IMR-90 (cell line): ENCODE measurements at regions of chr15 and their contacts with region 1.

Region 1: DNA sequence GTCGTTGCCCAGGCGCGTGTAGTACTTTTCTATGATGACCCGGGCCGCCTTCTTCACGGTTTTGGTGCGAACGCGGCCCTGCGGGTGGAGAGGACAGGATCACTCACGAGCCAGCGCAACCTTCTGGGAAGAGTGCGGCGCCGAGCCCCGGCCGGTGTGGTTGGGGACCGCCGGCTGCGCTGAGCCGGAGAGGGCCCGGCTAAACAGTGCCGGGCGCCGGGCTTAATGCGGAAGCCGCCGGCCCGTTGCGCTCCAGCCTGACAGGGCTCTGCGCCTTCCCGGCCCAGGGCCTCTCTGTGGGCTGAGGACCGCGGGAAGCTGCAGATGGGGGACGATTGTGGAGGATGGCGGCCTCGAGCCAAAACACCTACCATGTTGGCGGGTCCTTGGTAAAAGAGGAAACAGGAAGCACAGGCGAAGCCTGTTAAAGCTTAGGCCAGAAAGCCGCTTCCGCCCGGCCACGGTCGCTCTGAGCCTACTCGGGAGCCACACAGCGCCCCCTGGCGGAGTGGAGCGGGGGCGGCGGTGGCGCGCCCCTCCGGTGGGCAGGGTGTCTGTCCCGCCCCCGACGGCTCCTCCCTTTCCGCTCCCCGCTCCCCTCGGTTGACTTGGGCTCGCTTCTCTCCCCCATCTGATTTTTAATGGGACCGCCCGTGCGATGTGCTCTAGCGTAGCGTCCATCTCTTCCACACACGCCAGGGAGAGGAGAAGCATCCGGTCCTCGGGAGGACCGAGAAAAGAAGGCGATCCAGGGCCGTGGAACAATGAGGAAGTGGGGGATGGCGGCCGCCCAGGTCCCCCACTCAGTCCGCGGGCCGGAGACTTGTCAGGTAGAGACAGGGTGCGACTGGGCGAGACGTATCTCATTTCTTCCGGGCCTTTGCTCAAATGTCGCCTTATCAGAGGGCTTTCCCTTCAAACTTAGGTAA is at the start of gene RPS17:
- DNase-seq: peak; percentile 93
- ATAC-seq: peak; percentile 95
- H3K4me3 ChIP-seq: peak within 1 kb of the TSS; percentile 99
- H3K27ac ChIP-seq: peak within 1 kb of the TSS; percentile 89
- H3K4me1 ChIP-seq: peaks cover 6% of the 10 kb centered on the region
- H3K27me3 ChIP-seq: no peaks in the 10 kb centered on the region
- CTCF ChIP-seq: peak; percentile 99
- POLR2A ChIP-seq: peak; percentile 99
- RAD21 ChIP-seq: peak; percentile 43
- total RNA-seq, gene RPS17: 2,617 and 3,477 TPM in 2 replicates

Region 2: GRCh38 chr15:81466741-81467140 is 1073.6 kb before region 1 on chr15:
- CTCF ChIA-PET with region 1: no interaction called
- POLR2A ChIA-PET with region 1: no interaction called
- dilution Hi-C with region 1: no loop called
- in situ Hi-C with region 1: no loop called
- intact Hi-C with region 1: no loop called
- DNase-seq: no peak
- ATAC-seq: no peak
- H3K4me3 ChIP-seq: no peak overlapping the region
- H3K27ac ChIP-seq: no peak overlapping the region
- H3K4me1 ChIP-seq: no peaks in the 10 kb centered on the region
- H3K27me3 ChIP-seq: peaks cover 7% of the 10 kb centered on the region
- CTCF ChIP-seq: no peak
- POLR2A ChIP-seq: no peak
- RAD21 ChIP-seq: no peak

Region 3: GRCh38 chr15:82647045-82647834 is 106.9 kb after region 1 on chr15 and contains the start of gene CPEB1:
- CTCF ChIA-PET with region 1: no interaction called
- POLR2A ChIA-PET with region 1: no interaction called
- dilution Hi-C with region 1: no loop called
- in situ Hi-C with region 1: no loop called
- intact Hi-C with region 1: loop called (anchors 1 kb)
- DNase-seq: peak; percentile 30
- ATAC-seq: peak; percentile 76
- H3K4me3 ChIP-seq: peak within 1 kb of the TSS; percentile 63
- H3K27ac ChIP-seq: no peak within 1 kb of the TSS
- H3K4me1 ChIP-seq: no peaks in the 10 kb centered on the region
- H3K27me3 ChIP-seq: peaks cover 48% of the 10 kb centered on the region
- CTCF ChIP-seq: peak; percentile 16; the same call in 1 of the 2 replicates
- POLR2A ChIP-seq: no peak
- RAD21 ChIP-seq: no peak
- total RNA-seq, gene CPEB1: 6.9 and 12.5 TPM in 2 replicates

Region 4: DNA sequence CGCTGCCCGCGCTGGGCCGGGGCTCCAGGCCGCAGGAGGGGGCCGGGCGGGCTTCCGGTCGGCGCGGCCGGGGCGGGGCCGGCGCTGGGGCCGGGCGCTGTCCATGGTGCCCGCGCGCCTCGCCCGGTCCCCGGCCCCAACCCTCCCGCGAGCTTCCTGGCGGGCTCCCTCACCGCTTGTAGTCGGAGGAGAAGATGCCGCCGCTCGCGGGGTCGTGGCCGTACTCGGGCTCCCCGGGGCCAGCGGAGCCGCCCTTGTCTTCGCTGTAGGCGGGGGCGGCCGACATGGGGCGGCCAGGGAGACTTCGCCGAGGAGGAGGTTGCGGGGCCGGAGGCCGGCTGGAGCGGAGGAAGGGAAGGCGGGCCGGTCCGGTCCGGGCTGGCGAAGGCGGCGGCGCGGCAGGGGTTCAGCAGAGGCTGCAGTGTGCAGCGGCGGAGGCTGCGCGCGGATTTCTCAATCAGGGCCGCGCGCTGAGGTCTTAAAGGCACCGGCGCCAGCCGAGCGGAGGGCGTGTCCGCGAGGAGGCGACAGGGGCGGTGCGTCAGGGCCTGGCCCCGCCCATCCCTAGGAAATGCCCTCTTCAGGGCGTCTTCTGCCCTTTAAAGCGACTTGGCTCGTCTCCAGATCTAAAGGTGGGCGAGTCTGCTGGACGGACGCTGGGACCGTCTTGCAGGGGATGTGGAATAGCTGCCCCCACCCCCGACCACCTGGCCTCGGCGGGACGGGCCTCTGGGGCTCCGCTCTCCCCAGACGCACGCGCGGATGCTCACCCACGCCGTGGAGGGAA is 169.3 kb after region 1 on chr15 and contains the start of gene AP3B2:
- CTCF ChIA-PET with region 1: no interaction called
- POLR2A ChIA-PET with region 1: no interaction called
- dilution Hi-C with region 1: no loop called
- in situ Hi-C with region 1: no loop called
- intact Hi-C with region 1: loop called (anchors 10 kb)
- DNase-seq: peak; percentile 49
- ATAC-seq: peak; percentile 98
- H3K4me3 ChIP-seq: peak within 1 kb of the TSS; percentile 48
- H3K27ac ChIP-seq: no peak within 1 kb of the TSS
- H3K4me1 ChIP-seq: peaks cover 2% of the 10 kb centered on the region; the same call in 1 of the 2 replicates
- H3K27me3 ChIP-seq: 0 out of 2 replicates have a peak, but pooled peaks cover 2% of the 10 kb centered on the region
- CTCF ChIP-seq: no peak
- POLR2A ChIP-seq: no peak
- RAD21 ChIP-seq: no peak
- total RNA-seq, gene AP3B2: not detected in 2 replicates

Region 5: DNA sequence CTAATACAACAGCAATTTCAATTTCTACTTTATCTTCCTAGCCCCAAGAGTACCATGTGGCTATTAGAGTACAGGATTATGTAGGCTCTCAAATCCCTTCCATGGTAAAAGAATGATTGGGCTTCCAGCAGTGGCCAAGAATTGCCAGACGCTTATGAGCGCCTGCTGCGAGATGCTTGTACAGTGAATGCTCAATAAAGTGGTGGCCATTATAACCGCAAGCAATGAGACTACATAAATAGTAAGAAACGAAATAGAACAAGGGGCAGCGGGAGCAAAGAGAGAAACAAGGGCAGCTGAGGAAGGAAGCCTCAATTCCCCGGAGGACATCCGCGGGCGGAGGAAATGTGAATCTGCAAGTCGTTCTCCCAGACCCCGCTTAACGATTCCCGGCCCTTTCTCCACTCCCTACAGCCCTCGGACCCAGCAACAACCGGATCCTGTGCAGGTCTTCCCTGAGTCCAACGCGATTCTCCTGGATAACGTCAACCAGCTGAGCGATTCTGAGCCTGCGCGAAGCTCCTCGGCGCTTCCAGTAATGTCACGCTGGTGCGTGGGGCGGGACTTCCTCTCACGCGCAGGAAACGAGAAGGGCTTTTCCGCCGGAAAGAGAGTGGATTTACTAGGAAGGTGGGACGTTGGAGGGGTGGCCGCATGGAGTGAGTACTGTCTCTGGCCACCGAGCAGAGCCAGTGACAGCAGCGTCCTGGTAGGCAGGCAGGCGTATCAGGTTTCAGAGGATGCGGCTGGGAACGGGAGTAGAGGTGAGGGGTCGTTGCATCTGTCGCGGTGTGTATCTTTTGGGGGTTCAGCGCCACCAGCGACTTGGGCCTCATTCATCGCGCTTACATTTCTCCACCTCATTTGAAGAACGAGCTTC is 209.9 kb after region 1 on chr15:
- CTCF ChIA-PET with region 1: no interaction called
- POLR2A ChIA-PET with region 1: no interaction called
- dilution Hi-C with region 1: no loop called
- in situ Hi-C with region 1: no loop called
- intact Hi-C with region 1: loop called (anchors 1 kb)
- DNase-seq: peak; percentile 94
- ATAC-seq: peak; percentile 99
- H3K4me3 ChIP-seq: peak overlapping the region; percentile 86
- H3K27ac ChIP-seq: peak overlapping the region; percentile 87
- H3K4me1 ChIP-seq: peaks cover 2% of the 10 kb centered on the region; the same call in 1 of the 2 replicates
- H3K27me3 ChIP-seq: no peaks in the 10 kb centered on the region
- CTCF ChIP-seq: no peak
- POLR2A ChIP-seq: peak; percentile 77
- RAD21 ChIP-seq: no peak

Region 6: GRCh38 chr15:82778755-82779154 is 238.4 kb after region 1 on chr15:
- CTCF ChIA-PET with region 1: no interaction called
- POLR2A ChIA-PET with region 1: no interaction called
- dilution Hi-C with region 1: no loop called
- in situ Hi-C with region 1: no loop called
- intact Hi-C with region 1: no loop called
- DNase-seq: no peak
- ATAC-seq: no peak
- H3K4me3 ChIP-seq: no peak overlapping the region
- H3K27ac ChIP-seq: no peak overlapping the region
- H3K4me1 ChIP-seq: no peaks in the 10 kb centered on the region
- H3K27me3 ChIP-seq: no peaks in the 10 kb centered on the region
- CTCF ChIP-seq: no peak
- POLR2A ChIP-seq: no peak
- RAD21 ChIP-seq: no peak

Region 7: DNA sequence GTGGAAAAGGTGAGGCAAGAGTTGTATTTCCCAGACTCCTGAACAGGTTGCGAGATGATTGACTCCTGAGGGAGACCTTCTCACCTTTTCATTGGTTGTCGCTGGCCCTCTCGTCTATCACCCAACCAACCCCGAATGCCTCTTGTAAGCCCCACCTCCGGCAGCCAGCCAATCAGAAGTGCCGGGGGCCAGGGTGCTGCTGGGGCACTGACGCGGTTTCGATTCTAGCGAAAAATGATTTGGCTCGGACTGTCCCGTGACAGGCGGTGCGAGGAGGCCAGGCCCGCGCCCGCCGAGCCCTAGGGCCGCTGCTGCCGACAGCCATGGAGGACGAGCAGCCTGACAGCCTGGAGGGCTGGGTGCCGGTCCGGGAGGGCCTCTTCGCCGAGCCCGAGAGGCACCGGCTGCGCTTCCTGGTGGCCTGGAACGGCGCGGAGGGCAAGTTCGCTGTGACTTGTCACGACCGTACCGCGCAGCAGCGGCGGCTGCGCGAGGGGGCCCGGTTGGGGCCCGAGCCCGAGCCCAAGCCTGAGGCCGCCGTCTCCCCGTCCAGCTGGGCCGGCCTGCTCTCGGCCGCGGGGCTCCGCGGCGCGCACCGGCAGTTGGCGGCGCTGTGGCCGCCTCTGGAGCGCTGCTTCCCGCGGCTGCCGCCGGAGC is 269.2 kb after region 1 on chr15 and contains the start of gene WHAMM:
- CTCF ChIA-PET with region 1: no interaction called
- POLR2A ChIA-PET with region 1: no interaction called
- dilution Hi-C with region 1: no loop called
- in situ Hi-C with region 1: no loop called
- intact Hi-C with region 1: loop called (anchors 2 kb)
- DNase-seq: peak; percentile 98
- ATAC-seq: peak; percentile 96
- H3K4me3 ChIP-seq: peak within 1 kb of the TSS; percentile 88
- H3K27ac ChIP-seq: peak within 1 kb of the TSS; percentile 92
- H3K4me1 ChIP-seq: no peaks in the 10 kb centered on the region
- H3K27me3 ChIP-seq: no peaks in the 10 kb centered on the region
- CTCF ChIP-seq: 0 out of 2 replicates have a peak, but pooled peaks have one; percentile 24
- POLR2A ChIP-seq: peak; percentile 78
- RAD21 ChIP-seq: 0 out of 2 replicates have a peak, but pooled peaks have one; percentile 5
- total RNA-seq, gene WHAMM: 1.4 and 1.9 TPM in 2 replicates

Region 8: GRCh38 chr15:82875411-82876003 is 335.2 kb after region 1 on chr15:
- CTCF ChIA-PET with region 1: no interaction called
- POLR2A ChIA-PET with region 1: no interaction called
- dilution Hi-C with region 1: no loop called
- in situ Hi-C with region 1: no loop called
- intact Hi-C with region 1: no loop called
- DNase-seq: peak; percentile 86
- ATAC-seq: peak; percentile 91
- H3K4me3 ChIP-seq: no peak overlapping the region
- H3K27ac ChIP-seq: no peak overlapping the region
- H3K4me1 ChIP-seq: 0 out of 2 replicates have a peak, but pooled peaks cover 1% of the 10 kb centered on the region
- H3K27me3 ChIP-seq: no peaks in the 10 kb centered on the region
- CTCF ChIP-seq: no peak
- POLR2A ChIP-seq: no peak
- RAD21 ChIP-seq: no peak